ENCODE measurements at regions of chr3 and their contacts with region 1.

Region 1: DNA sequence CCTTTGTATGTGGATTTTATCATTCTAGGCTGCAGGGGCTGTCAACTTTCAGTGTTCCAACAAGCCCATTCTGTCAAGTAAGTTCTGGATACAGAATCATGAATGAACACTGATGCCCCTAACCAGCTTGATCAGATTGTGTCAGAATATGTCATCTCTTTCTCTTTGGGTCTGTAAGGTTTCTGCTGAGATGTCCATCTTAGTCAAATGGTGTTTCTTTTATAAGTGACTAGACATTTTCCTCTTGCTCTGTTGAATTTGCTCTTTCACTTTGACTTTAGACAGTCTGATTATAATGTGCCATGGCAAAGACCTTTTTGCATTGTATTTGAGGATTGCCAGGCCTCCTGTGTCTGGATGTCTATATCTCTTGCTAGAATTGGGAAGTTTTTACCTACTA is 660.9 kb upstream of the CBLB start:
- DNase-seq: no peak
- H3K4me3 ChIP-seq: no peak overlapping the region
- H3K27ac ChIP-seq: no peak overlapping the region
- H3K4me1 ChIP-seq: no peaks in the 10 kb centered on the region
- H3K27me3 ChIP-seq: no peaks in the 10 kb centered on the region
- CTCF ChIP-seq: no peak
- POLR2A ChIP-seq: no peak

Region 2: GRCh38 chr3:106272302-106272701 is 257.4 kb before region 1 on chr3:
- intact Hi-C with region 1: loop called (anchors 5 kb)
- DNase-seq: no peak
- H3K4me3 ChIP-seq: no peak overlapping the region
- H3K27ac ChIP-seq: no peak overlapping the region
- H3K4me1 ChIP-seq: no peaks in the 10 kb centered on the region
- H3K27me3 ChIP-seq: no peaks in the 10 kb centered on the region
- CTCF ChIP-seq: no peak
- POLR2A ChIP-seq: no peak

Region 3: GRCh38 chr3:106566277-106566676 is 36.5 kb after region 1 on chr3:
- intact Hi-C with region 1: loop called (anchors 2 kb)
- DNase-seq: no peak
- H3K4me3 ChIP-seq: no peak overlapping the region
- H3K27ac ChIP-seq: no peak overlapping the region
- H3K4me1 ChIP-seq: no peaks in the 10 kb centered on the region
- H3K27me3 ChIP-seq: no peaks in the 10 kb centered on the region
- CTCF ChIP-seq: no peak
- POLR2A ChIP-seq: no peak

Measured in breast epithelium (tissue), 4 donors.